Gastrocnemius medialis (tissue), 4 donors: ENCODE measurements at regions of chr19 and their contacts with region 1.

Region 1: GRCh38 chr19:6279931-6280591 is at the start of gene MLLT1:
- DNase-seq: peak; percentile 97
- ATAC-seq: peak; percentile 94
- H3K4me3 ChIP-seq: peak within 1 kb of the TSS; percentile 70 to 92 (median 83)
- H3K27ac ChIP-seq: peak within 1 kb of the TSS; percentile 85 to 91 (median 88)
- H3K4me1 ChIP-seq: peaks cover 31 to 36% of the 10 kb centered on the region in 2 donors
- H3K27me3 ChIP-seq: no peaks in the 10 kb centered on the region
- CTCF ChIP-seq: peak in 4 of 5 experiments; percentile 68 to 97 (median 80)
- POLR2A ChIP-seq: peak; percentile 76 to 81
- total RNA-seq, gene MLLT1: 13.9 to 37.7 (median 24.4) TPM

Region 2: GRCh38 chr19:5904352-5905113 is 375.5 kb before region 1 on chr19 and contains the start of gene VMAC:
- in situ Hi-C with region 1: no loop called
- intact Hi-C with region 1: loop called (anchors 5 kb)
- DNase-seq: peak; percentile 100
- ATAC-seq: peak; percentile 81 to 88
- H3K4me3 ChIP-seq: peak within 1 kb of the TSS; percentile 68 to 100 (median 97)
- H3K27ac ChIP-seq: peak within 1 kb of the TSS; percentile 93 to 98 (median 94)
- H3K4me1 ChIP-seq: peaks cover 10 to 20% of the 10 kb centered on the region in 2 donors
- H3K27me3 ChIP-seq: no peaks in the 10 kb centered on the region
- CTCF ChIP-seq: no peak
- POLR2A ChIP-seq: peak in 1 of 2 donors; percentile 5
- total RNA-seq, gene VMAC: 0.46 to 3.0 (median 2.1) TPM

Region 3: GRCh38 chr19:6056801-6057650 is 223.0 kb before region 1 on chr19:
- in situ Hi-C with region 1: no loop called
- intact Hi-C with region 1: loop called (anchors 10 kb)
- DNase-seq: peak; percentile 70 to 81
- ATAC-seq: peak; percentile 95
- H3K4me3 ChIP-seq: peak overlapping the region; percentile 29 to 54 (median 47)
- H3K27ac ChIP-seq: peak overlapping the region; percentile 82 to 91 (median 87)
- H3K4me1 ChIP-seq: peaks cover 27 to 32% of the 10 kb centered on the region in 2 donors
- H3K27me3 ChIP-seq: no peaks in the 10 kb centered on the region
- CTCF ChIP-seq: no peak
- POLR2A ChIP-seq: peak in 1 of 2 donors; percentile 9

Region 4: GRCh38 chr19:6110360-6110977 is 169.6 kb before region 1 on chr19 and contains the start of gene RFX2:
- in situ Hi-C with region 1: no loop called
- intact Hi-C with region 1: loop called (anchors 1 kb)
- DNase-seq: peak; percentile 98
- ATAC-seq: peak; percentile 100
- H3K4me3 ChIP-seq: peak within 1 kb of the TSS; percentile 65 to 81 (median 73)
- H3K27ac ChIP-seq: peak within 1 kb of the TSS; percentile 57 to 69 (median 64)
- H3K4me1 ChIP-seq: peaks cover 10 to 16% of the 10 kb centered on the region in 2 donors
- H3K27me3 ChIP-seq: peaks cover 0 to 15% (median 0%) of the 10 kb centered on the region in 3 donors
- CTCF ChIP-seq: no peak
- POLR2A ChIP-seq: peak; percentile 38 to 41
- total RNA-seq, gene RFX2: 0.31 to 10.5 (median 2.2) TPM

Region 5: DNA sequence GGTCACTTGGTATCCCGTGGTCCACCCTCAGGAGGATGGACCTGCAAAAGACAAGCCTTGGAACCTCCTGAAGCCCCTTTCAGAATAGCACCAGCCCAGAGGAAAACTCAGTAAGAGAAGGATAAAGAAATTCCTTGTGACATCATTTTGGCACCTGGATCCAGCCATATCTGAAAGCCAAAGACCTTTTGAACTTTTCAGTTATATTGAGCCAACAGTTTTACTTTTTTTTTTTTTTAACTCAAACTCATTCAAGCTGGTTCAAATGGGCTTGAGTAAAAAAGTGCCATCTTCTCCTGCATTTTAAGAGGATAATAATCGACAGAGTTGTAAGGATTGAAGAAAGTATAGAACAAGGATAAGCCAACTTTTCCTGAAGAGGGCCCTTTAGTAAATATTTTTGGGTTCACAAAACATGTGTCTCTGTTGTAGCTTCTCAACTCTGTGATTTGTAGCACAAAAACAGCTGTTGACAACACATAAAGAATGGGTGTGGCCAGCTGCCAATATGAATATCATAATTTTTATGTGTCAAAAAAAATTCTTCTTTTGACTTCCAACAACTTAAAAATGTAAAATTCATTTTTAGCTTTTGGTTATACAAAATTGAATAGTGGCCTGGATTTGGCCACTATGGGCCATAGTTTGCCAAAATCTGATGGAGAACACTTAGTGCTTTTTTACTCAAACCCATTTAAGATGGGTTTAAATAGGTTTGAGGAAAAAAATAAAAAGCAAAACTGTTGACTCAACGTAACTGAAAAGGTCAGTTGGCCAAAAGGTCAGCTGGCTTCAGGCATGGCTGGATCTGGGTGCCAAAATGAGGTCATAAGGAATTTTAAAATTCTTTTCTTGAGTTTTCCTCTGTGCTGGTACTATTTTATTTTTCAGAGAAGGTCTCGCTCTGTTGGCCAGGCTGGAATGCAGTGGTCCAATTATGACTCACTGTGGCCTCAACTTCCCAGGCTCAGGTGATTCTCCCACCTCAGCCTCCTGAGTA is 93.9 kb before region 1 on chr19:
- in situ Hi-C with region 1: no loop called
- intact Hi-C with region 1: no loop called
- DNase-seq: no peak
- ATAC-seq: no peak
- H3K4me3 ChIP-seq: no peak overlapping the region
- H3K27ac ChIP-seq: no peak overlapping the region
- H3K4me1 ChIP-seq: no peaks in the 10 kb centered on the region
- H3K27me3 ChIP-seq: peaks cover 9 to 15% (median 10%) of the 10 kb centered on the region in 3 donors
- CTCF ChIP-seq: no peak
- POLR2A ChIP-seq: no peak

Region 6: GRCh38 chr19:6218491-6219162 is 61.4 kb before region 1 on chr19:
- in situ Hi-C with region 1: loop called in 1 of 4 experiments (anchors 10 kb)
- intact Hi-C with region 1: loop called (anchors 1 kb)
- DNase-seq: peak; percentile 73 to 92
- ATAC-seq: peak; percentile 53 to 73
- H3K4me3 ChIP-seq: no peak overlapping the region
- H3K27ac ChIP-seq: peak overlapping the region in 2 of 4 donors; percentile 23 to 51
- H3K4me1 ChIP-seq: peaks cover 46 to 50% of the 10 kb centered on the region in 2 donors
- H3K27me3 ChIP-seq: no peaks in the 10 kb centered on the region
- CTCF ChIP-seq: peak; percentile 96 to 99 (median 98)
- POLR2A ChIP-seq: no peak

Region 7: DNA sequence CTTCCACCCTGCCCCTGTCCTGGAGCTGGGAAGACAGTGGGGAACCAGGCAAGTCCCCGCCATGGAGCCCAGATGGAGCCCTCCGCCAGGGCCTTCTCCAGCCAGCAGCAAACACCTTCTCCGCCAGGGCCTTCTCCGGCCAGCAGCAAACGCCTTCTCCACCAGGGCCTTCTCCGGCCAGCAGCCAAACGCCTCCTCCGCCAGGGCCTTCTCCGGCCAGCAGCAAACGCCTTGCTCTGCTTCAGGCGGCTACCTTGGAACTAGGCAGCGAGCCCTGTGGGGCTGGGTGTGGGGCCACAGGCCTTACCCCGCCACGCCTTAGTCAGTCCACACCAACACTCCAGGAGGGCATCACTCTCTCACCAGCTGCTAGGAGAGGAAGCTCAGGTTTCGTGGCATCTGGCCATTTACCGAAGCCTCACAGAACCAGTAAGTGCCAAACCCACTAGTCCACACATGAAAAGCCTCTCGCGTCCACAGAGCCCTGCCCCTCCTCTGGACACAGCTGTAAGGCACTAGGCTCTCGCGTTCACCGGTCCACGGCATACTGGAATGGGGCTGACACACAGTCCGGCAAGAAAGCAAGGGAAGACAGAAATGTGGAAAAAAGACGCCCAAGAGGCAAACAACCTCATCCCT is 41.3 kb before region 1 on chr19:
- in situ Hi-C with region 1: no loop called
- intact Hi-C with region 1: loop called (anchors 2 kb)
- DNase-seq: peak; percentile 75 to 88
- ATAC-seq: peak; percentile 83 to 86
- H3K4me3 ChIP-seq: peak overlapping the region in 3 of 4 donors; percentile 4 to 23 (median 4)
- H3K27ac ChIP-seq: peak overlapping the region; percentile 83 to 92 (median 86)
- H3K4me1 ChIP-seq: peaks cover 73 to 81% of the 10 kb centered on the region in 2 donors
- H3K27me3 ChIP-seq: no peaks in the 10 kb centered on the region
- CTCF ChIP-seq: peak in 2 of 5 experiments; percentile 9 to 13
- POLR2A ChIP-seq: no peak

Region 8: DNA sequence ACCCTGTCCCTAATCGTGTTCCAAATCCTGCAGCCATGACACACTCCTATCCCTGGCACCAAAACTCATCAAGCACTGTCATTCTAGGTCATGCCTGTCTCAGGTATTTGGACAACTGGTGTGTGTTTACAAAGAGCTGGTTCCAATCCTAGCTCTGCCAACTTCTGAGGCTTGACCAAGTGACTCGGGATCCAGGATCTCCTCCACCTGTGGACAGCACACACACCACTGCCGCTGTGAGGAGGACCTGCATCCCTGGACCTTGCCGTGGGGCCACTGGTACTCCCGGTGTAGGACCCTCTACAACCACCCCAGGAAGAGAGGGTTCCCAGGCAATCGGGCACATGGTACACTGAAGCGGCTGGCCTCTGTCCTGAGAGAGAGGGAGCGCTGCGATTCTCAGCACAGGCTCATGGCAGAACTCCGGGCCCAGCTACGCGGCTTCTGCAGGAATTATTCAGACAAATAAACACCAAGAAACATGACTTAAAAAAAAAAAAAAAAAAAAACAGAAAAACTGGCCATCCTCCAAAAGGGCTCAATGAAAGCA is 20.7 kb before region 1 on chr19:
- in situ Hi-C with region 1: no loop called
- intact Hi-C with region 1: no loop called
- DNase-seq: peak; percentile 75 to 81
- ATAC-seq: peak; percentile 97 to 98
- H3K4me3 ChIP-seq: no peak overlapping the region
- H3K27ac ChIP-seq: peak overlapping the region; percentile 64 to 84 (median 80)
- H3K4me1 ChIP-seq: peaks cover 31 to 58% of the 10 kb centered on the region in 2 donors
- H3K27me3 ChIP-seq: no peaks in the 10 kb centered on the region
- CTCF ChIP-seq: no peak
- POLR2A ChIP-seq: no peak